Heart right ventricle (tissue), 16 donors: ENCODE measurements at regions of chr11 and their contacts with region 1.

Region 1: GRCh38 chr11:33344611-33345010 is 87.4 kb downstream of the HIPK3 start:
- DNase-seq: no peak
- ATAC-seq: peak in 5 of 8 donors; percentile 37 to 63 (median 48)
- H3K4me3 ChIP-seq: no peak overlapping the region
- H3K27ac ChIP-seq: no peak overlapping the region
- H3K4me1 ChIP-seq: peaks cover 0 to 23% (median 0%) of the 10 kb centered on the region in 9 donors
- H3K27me3 ChIP-seq: no peaks in the 10 kb centered on the region
- CTCF ChIP-seq: peak in 7 of 9 donors; percentile 7 to 50 (median 22)

Region 2: DNA sequence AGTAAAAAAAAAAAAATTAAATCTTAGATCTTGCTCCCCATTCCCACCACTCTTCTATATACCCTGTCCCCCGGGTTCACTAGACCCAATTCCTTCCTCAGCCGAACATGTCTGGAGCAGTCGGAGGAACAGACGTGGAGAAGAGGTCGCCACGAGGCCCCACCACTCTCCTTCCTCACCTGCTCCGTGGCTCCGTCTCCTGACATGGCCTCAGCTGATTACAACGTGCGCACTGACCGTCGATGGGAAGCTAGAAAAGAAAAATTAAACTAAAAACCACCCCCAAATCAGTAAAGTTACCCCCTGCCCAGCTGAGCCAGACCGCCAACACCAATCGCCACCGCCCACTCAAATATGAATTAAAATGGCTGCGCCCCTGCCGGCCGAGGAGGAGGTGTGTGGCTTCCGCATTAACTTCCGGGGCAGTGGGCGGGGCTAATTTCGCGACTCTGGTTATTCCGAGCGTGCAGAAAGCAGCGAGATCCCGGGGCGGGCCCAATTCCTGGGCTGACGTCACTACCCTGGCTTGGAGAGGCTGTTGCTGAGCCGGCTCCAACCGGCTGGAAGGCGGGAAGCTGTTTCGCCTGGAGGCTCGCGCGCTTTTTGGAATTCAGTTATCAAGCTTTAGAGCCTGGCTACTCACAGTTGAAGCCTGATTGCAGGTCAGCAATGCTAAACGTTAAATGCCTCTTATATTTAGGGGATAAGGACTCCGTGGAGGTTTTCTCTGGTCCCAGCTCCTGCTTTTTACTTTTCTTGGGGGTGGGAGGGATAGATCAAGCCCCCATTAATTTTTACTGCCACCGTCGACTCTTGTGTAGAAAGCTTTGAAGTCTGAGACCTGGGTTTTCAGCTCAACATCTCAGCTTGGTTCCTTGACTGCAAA is 183.2 kb before region 1 on chr11 and contains the start of gene CSTF3:
- intact Hi-C with region 1: loop called in 3 of 10 experiments (anchors 5 to 10 kb)
- DNase-seq: peak; percentile 100
- ATAC-seq: peak; percentile 98 to 100 (median 100)
- H3K4me3 ChIP-seq: peak within 1 kb of the TSS; percentile 42 to 83 (median 74)
- H3K27ac ChIP-seq: peak within 1 kb of the TSS in 9 of 10 donors; percentile 34 to 89 (median 78)
- H3K4me1 ChIP-seq: peaks cover 0 to 48% (median 36%) of the 10 kb centered on the region in 9 donors
- H3K27me3 ChIP-seq: no peaks in the 10 kb centered on the region
- CTCF ChIP-seq: peak; percentile 48 to 71 (median 62)
- total RNA-seq, gene CSTF3: 8.6 to 16.0 (median 12.7) TPM

Region 3: DNA sequence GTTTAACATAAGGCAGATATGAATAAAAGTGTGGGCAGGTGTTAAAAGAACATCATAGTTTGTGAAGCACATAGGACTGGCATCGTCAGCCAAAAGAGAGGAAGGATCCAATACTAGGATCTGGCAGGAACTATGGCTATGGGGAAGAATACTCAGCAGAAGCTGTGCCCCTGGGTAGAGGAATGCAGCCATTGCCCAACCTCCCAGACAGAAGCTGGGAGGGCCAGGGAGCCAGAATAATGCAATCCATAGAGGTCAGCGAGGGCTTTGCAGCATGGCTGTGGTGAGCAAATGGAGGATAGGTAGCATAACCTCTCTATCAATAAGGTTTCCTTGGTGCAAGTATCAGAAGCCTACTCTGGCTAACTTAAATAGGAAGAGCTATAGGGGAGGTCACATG is 171.6 kb before region 1 on chr11:
- intact Hi-C with region 1: loop called in 3 of 10 experiments (anchors 5 to 10 kb)
- DNase-seq: no peak
- ATAC-seq: peak in 3 of 8 donors; percentile 40 to 89 (median 47)
- H3K4me3 ChIP-seq: no peak overlapping the region
- H3K27ac ChIP-seq: no peak overlapping the region
- H3K4me1 ChIP-seq: peaks cover 0 to 9% (median 3%) of the 10 kb centered on the region in 9 donors
- H3K27me3 ChIP-seq: no peaks in the 10 kb centered on the region
- CTCF ChIP-seq: no peak

Region 4: DNA sequence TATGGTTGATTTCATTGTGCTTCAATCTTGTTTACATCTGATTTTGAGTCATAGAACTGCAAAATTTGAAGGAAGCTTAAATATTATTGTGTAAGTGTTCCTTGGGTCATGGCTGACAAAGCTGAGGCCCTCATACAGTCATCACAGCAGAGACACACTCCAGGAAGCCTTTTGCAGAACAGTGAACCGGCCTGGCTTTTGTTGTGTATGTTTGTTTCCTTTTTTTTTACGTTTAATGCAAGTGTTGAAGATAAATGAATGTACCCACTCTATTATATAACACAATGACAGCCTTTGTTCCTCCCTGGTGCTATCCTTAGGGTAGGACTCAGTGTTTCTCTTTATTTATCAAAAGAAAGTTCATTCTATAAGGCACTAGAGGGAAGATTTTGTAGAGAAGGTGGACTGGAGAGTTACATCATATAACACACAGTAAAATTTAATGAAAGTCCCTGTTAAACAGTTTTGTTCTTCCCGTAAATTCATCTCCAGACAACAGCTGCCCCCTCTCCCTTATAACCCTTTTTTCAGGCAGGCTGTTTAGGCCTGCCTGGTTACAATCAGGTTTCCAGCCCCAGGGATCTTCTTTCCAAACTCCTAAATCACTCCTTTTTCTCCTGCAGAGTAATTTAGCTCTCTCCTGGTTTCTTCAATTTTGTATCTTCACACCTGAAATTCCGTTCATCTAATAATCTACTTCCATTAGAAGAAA is 149.0 kb before region 1 on chr11:
- intact Hi-C with region 1: no loop called
- DNase-seq: no peak
- ATAC-seq: no peak
- H3K4me3 ChIP-seq: no peak overlapping the region
- H3K27ac ChIP-seq: peak overlapping the region in 1 of 10 donors; percentile 41
- H3K4me1 ChIP-seq: peaks cover 0 to 19% (median 0%) of the 10 kb centered on the region in 9 donors
- H3K27me3 ChIP-seq: no peaks in the 10 kb centered on the region
- CTCF ChIP-seq: no peak

Region 5: DNA sequence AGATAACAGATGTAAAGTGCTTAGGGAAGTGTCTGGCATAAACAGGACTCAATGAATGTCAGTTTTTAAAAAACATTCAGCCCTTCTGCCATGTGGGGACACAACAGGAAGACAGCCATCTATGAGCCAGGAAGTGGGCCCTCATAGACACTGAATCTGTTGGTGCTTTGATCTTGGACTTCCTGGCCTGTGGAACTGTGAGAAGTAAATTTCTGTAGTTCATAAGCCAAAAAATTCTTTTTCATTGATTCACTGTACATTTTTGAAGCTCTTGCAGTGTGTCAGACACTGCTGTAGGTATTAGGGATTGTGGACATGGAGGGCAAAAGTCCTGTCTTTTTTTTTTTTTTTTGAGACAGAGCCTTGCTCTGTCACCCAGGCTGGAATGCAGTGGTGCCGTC is 101.2 kb after region 1 on chr11:
- intact Hi-C with region 1: no loop called
- DNase-seq: no peak
- ATAC-seq: no peak
- H3K4me3 ChIP-seq: no peak overlapping the region
- H3K27ac ChIP-seq: no peak overlapping the region
- H3K4me1 ChIP-seq: peaks cover 0 to 12% (median 0%) of the 10 kb centered on the region in 9 donors
- H3K27me3 ChIP-seq: no peaks in the 10 kb centered on the region
- CTCF ChIP-seq: no peak

Region 6: GRCh38 chr11:34696862-34697261 is 1352.3 kb after region 1 on chr11:
- intact Hi-C with region 1: no loop called
- DNase-seq: no peak
- ATAC-seq: no peak
- H3K4me3 ChIP-seq: no peak overlapping the region
- H3K27ac ChIP-seq: no peak overlapping the region
- H3K4me1 ChIP-seq: no peaks in the 10 kb centered on the region
- H3K27me3 ChIP-seq: no peaks in the 10 kb centered on the region
- CTCF ChIP-seq: no peak